ENCODE measurements at regions of chr7 and their contacts with region 1.

Region 1: GRCh38 chr7:48035301-48035966 is at the start of gene C7orf57:
- DNase-seq: peak; percentile 87
- H3K4me3 ChIP-seq: peak within 1 kb of the TSS; percentile 53 to 74 (median 61)
- H3K27ac ChIP-seq: peak within 1 kb of the TSS; percentile 33
- H3K4me1 ChIP-seq: peaks cover 15% of the 10 kb centered on the region
- H3K27me3 ChIP-seq: no peaks in the 10 kb centered on the region
- CTCF ChIP-seq: peak in 1 of 2 donors; percentile 25
- total RNA-seq, gene C7orf57: 0.67 to 2.0 TPM

Region 2: GRCh38 chr7:47866120-47866519 is 169.3 kb before region 1 on chr7:
- CTCF ChIA-PET with region 1: no interaction called
- dilution Hi-C with region 1: no loop called
- in situ Hi-C with region 1: no loop called
- intact Hi-C with region 1: no loop called
- DNase-seq: no peak
- H3K4me3 ChIP-seq: no peak overlapping the region
- H3K27ac ChIP-seq: no peak overlapping the region
- H3K4me1 ChIP-seq: no peaks in the 10 kb centered on the region
- H3K27me3 ChIP-seq: no peaks in the 10 kb centered on the region
- CTCF ChIP-seq: no peak

Region 3: DNA sequence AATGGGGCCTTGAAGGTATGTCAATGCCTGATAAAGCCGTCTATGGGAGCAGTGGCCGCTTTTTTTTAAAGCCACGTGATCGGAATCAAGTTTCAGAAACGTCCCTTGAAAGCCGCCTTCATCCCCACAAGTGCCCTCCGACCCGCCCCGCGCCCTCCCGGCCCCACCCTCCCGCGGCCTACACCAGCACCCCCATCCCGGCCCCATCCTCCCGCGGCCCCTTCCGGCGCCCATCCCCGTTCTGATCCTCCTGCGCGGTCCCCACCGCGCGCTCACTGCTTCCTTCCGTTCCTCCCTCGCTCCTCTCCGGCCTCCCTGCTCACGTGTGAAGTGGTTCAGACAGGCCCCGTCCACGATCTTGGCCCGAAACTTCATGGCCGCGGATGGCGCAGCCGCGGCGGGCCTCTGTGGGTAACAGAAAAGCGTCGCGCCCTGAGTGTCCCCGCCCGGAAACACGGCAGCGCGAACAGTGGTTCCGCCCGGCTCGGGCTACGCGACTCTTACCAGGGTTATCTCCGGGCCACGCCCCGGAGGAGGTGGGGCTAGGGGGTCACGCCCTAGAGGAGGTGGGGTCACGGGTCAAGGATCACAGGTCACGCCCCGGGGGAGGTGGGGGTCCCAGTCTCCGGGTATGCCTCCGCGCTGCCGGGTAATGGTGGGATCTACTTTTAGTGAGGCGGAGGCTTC is 56.1 kb before region 1 on chr7 and contains the start of gene HUS1:
- CTCF ChIA-PET with region 1: no interaction called
- dilution Hi-C with region 1: no loop called
- in situ Hi-C with region 1: no loop called
- intact Hi-C with region 1: loop called (anchors 5 kb)
- DNase-seq: peak; percentile 85
- H3K4me3 ChIP-seq: peak within 1 kb of the TSS; percentile 73 to 90 (median 78)
- H3K27ac ChIP-seq: peak within 1 kb of the TSS; percentile 50
- H3K4me1 ChIP-seq: peaks cover 10% of the 10 kb centered on the region
- H3K27me3 ChIP-seq: no peaks in the 10 kb centered on the region
- CTCF ChIP-seq: no peak
- total RNA-seq, gene HUS1: 31.3 to 36.8 TPM

Region 4: DNA sequence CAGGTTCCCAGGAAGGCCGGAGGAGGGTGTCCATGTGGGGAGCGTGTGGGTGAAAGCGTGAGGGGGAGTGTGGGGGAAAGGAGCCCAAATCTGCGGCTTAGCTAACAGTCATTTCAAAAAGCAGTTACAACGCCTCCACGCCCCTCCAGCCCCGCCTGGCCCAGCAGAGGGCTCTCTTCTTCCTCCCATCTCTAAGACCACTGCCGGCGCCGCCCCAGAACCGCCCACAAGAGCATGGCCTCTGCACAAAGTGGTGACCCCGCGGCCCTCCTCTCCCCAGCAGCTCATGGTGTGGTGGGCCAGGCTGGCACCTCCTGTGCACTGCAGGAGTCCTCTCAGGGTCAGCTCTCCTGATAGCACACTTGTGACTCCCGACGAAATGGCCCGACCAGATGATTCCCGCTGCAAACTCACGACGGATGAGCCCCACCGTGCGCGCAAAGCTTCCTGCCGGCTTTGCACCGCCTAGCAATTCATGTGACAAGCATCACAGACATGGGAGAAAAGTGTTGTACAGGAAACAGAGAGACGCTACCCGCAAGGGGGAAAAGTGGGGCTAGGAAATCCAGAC is 43.6 kb before region 1 on chr7:
- CTCF ChIA-PET with region 1: no interaction called
- dilution Hi-C with region 1: loop called (anchors 5 kb)
- in situ Hi-C with region 1: no loop called
- intact Hi-C with region 1: loop called (anchors 5 kb)
- DNase-seq: peak; percentile 52
- H3K4me3 ChIP-seq: peak overlapping the region; percentile 34 to 52 (median 35)
- H3K27ac ChIP-seq: no peak overlapping the region
- H3K4me1 ChIP-seq: peaks cover 7% of the 10 kb centered on the region
- H3K27me3 ChIP-seq: no peaks in the 10 kb centered on the region
- CTCF ChIP-seq: peak; percentile 32 to 62

Region 5: DNA sequence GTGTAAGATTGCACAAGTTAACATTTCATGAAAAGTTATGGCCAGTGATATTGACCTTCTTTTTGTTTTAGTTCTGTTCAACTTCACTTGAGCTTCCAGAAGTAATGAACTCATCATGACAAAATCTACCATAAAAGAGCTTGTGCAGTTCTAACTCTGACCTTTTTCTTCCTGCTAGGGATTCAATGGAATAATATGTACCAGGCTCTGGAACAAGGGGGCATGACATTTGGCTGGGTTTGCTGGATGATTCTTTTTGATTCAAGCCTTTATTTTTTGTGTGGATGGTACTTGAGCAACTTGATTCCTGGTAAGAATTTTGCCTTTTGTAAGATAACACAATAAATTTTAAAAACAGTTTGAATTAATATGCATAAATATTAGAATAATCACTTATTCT is 340.8 kb after region 1 on chr7:
- CTCF ChIA-PET with region 1: no interaction called
- dilution Hi-C with region 1: no loop called
- in situ Hi-C with region 1: no loop called
- intact Hi-C with region 1: no loop called
- DNase-seq: no peak
- H3K4me3 ChIP-seq: no peak overlapping the region
- H3K27ac ChIP-seq: no peak overlapping the region
- H3K4me1 ChIP-seq: peaks cover 8% of the 10 kb centered on the region
- H3K27me3 ChIP-seq: no peaks in the 10 kb centered on the region
- CTCF ChIP-seq: no peak

Measured in mammary epithelial cell (primary cell).